ENCODE measurements at regions of chr20 and their contacts with region 1.

Region 1: GRCh38 chr20:36808317-36809257 is 35.0 kb upstream of the DSN1 start:
- DNase-seq: peak; percentile 36
- H3K4me3 ChIP-seq: no peak overlapping the region
- CTCF ChIP-seq: peak; percentile 80

Region 2: GRCh38 chr20:36784900-36785299 is 23.7 kb before region 1 on chr20:
- CTCF ChIA-PET with region 1: interaction called, 60 read pairs
- POLR2A ChIA-PET with region 1: no interaction called
- DNase-seq: no peak
- H3K4me3 ChIP-seq: no peak overlapping the region
- CTCF ChIP-seq: no peak

Region 3: GRCh38 chr20:36792422-36792821 is 16.2 kb before region 1 on chr20:
- CTCF ChIA-PET with region 1: interaction called, 60 read pairs
- POLR2A ChIA-PET with region 1: no interaction called
- DNase-seq: no peak
- H3K4me3 ChIP-seq: no peak overlapping the region
- CTCF ChIP-seq: peak; percentile 67

Region 4: GRCh38 chr20:36821964-36822437 is 13.4 kb after region 1 on chr20:
- CTCF ChIA-PET with region 1: interaction called, 46 read pairs
- POLR2A ChIA-PET with region 1: no interaction called
- DNase-seq: no peak
- H3K4me3 ChIP-seq: no peak overlapping the region
- CTCF ChIP-seq: no peak

Region 5: DNA sequence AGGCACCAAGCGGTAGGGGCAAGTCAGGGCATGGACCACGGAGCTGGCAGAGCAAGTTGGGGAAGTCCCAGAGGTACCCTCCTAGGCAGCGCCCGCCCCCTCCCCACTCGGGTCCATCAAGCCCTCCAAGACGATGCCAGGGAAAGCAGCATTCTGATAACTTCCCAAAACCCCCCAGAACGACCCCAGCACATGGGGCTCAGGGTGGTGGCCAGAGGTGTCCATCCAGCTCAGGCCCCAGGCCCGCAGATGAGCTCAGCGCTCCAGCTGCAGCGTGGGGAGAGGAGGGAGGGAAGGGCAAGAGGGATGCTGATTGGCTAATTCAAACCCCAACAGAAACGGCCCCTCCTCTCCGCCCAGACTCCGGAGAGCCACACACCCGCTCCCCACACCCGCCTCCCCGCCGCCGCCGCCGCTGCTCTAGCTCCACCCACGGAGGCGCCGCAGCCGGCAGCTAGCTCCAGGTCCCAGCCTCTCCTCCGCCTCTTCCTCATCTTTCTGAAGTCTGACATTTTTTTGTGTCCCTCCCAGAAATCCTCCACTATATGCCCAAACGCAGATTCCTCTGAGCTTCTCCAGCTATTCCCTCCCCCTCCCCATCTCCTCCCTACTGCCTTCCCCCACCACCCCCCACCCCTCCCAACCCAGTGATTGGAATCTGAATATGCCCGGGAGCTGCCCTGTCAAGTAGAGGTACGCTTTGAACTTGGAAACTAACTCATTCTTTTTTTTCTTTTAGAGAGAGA is 27.0 kb after region 1 on chr20:
- CTCF ChIA-PET with region 1: interaction called, 11 read pairs
- POLR2A ChIA-PET with region 1: no interaction called
- DNase-seq: peak; percentile 63
- H3K4me3 ChIP-seq: peak overlapping the region; percentile 27
- CTCF ChIP-seq: no peak

Region 6: DNA sequence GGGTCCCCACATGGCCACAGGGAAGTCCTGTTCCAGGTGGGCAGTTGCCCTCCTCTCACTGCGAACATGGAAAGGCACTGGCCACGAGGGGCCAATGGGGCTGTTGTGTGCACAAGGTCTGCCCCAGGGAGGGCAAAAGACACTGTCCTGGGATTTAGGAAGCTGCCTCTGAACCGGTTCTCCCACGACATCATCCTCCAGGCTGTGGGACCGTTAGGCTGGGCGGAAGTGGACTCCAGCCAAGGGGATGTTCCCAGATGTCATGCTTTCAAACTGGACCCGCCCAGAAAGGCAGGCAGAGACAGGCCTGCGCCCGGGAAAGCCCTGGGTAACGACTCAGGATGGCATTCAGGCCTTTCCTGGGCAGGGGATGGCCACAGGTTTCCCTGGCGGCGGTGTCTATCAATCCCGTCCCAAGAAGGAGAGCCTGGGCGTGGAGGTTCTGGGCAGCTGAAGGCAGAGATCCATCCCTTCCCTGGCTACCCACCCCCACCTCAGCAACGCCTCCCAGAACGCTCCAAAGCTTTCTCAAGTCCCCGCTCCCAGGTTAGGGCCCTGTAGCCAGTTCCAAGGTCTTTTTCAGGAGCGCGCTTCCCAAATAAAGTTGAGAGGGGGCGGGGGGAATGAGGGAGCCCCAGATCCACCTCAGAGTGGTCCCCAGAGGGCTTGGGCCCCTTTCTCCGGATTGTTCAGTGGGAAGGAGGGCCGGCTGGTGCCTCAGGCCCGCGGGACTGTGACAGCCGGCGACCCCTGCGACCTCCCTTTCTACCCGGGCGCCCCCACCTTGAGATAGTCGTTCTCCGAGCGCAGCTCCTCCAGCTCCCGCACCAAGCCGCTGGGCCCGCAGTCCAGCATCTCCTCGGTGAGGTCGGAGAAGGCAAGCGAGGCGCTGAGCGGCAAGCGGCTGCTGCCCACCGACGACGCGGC is 53.6 kb after region 1 on chr20:
- CTCF ChIA-PET with region 1: interaction called, 13 read pairs
- POLR2A ChIA-PET with region 1: interaction called, 3 read pairs
- DNase-seq: no peak
- H3K4me3 ChIP-seq: peak overlapping the region; percentile 69
- CTCF ChIP-seq: no peak

Measured in AG04449 (cell line).